Natural killer cell (primary cell): ENCODE measurements at regions of chr1 and their contacts with region 1.

Region 1: GRCh38 chr1:4652631-4653327 is 1.6 kb upstream of the AJAP1 start:
- DNase-seq: peak; percentile 44 to 68
- ATAC-seq: peak; percentile 63 to 93 (median 74)
- H3K4me3 ChIP-seq: no peak overlapping the region
- H3K4me3 Mint-ChIP-seq: no peak overlapping the region
- H3K27ac ChIP-seq: no peak overlapping the region
- H3K27ac Mint-ChIP-seq: no peak overlapping the region
- H3K4me1 ChIP-seq: peaks cover 5% of the 10 kb centered on the region
- H3K4me1 Mint-ChIP-seq: peaks cover 0 to 4% of the 10 kb centered on the region in 2 donors
- H3K27me3 ChIP-seq: peaks cover 7% of the 10 kb centered on the region
- H3K27me3 Mint-ChIP-seq: peaks cover 18 to 25% of the 10 kb centered on the region in 2 donors
- CTCF ChIP-seq: peak; percentile 93

Region 2: DNA sequence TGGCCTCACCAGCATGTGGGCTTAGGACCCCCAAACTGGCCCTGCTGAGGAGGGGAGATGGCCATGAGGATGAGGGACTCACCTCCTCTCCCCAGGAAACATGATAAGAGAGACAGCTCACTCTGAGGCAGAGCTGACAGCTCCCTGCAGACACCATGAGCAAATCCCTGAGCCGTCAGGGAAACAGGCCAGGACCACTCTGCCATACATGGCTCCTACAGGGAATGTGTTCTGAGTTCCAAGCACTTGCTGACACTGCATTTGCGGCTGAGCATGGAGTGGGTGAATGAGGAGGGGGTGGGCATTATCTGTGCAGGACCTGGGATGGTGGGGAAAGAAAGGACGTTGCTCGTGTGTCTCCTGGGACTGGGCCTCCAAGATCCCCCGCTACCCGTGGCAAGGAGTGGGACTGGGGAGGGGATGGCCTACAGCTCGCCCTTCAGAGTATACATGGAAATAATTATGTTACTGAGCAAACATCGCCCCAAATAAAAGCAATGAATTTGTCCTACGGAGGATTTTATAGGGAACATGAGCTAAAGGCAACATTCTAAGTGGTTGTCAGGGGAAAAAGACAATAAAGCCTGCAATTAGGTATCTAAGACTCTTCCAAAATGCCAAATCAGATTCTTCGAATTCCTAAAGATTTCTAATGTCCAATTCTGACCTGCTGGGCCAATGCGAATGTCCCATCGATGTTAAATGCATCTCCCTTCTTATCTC is 354.3 kb before region 1 on chr1:
- intact Hi-C with region 1: no loop called
- DNase-seq: no peak
- ATAC-seq: no peak
- H3K4me3 ChIP-seq: no peak overlapping the region
- H3K4me3 Mint-ChIP-seq: no peak overlapping the region
- H3K27ac ChIP-seq: no peak overlapping the region
- H3K27ac Mint-ChIP-seq: no peak overlapping the region
- H3K4me1 ChIP-seq: no peaks in the 10 kb centered on the region
- H3K4me1 Mint-ChIP-seq: no peaks in the 10 kb centered on the region
- H3K27me3 ChIP-seq: no peaks in the 10 kb centered on the region
- H3K27me3 Mint-ChIP-seq: peaks cover 4% of the 10 kb centered on the region in 2 donors
- CTCF ChIP-seq: no peak

Region 3: DNA sequence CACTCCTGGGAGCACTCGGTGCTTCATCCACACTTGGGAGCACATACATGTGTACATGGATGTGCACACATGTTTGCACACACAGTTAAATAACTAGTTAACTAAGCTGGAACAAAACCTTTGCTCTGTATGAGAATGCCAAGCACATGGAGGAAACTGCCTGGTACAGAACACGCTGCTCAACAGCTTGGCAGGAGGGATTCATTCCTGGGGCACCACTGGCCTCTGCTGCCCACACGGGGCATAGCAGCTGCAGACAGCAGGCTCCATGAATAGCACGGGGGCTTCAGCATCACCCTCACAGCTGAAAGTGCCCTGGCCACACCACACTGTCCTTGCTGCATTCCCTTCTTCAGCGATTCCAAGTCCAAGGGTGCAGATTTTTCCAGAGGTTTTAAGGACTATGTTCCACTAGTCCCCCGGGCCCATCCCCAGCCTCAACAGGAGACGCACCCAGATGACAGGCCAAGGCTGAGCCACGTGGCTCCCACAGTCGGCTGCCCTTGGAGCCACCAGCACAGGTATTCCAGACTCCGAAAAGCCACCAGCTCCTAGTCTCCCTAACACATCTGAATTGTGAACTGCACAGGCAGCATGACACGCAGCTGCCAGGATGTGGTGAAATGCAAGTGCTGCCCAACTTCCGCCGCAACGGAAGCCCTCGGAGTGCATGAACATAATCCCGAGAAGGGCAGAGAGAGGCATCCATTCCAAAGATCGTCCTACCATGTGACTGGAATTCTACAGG is 1322.5 kb after region 1 on chr1:
- intact Hi-C with region 1: loop called (anchors 10 kb)
- DNase-seq: peak in 1 of 2 donors; percentile 71
- ATAC-seq: peak; percentile 73 to 88 (median 80)
- H3K4me3 ChIP-seq: no peak overlapping the region
- H3K4me3 Mint-ChIP-seq: peak overlapping the region; percentile 9
- H3K27ac ChIP-seq: no peak overlapping the region
- H3K27ac Mint-ChIP-seq: no peak overlapping the region
- H3K4me1 ChIP-seq: peaks cover 4% of the 10 kb centered on the region
- H3K4me1 Mint-ChIP-seq: peaks cover 5 to 16% of the 10 kb centered on the region in 2 donors
- H3K27me3 ChIP-seq: no peaks in the 10 kb centered on the region
- H3K27me3 Mint-ChIP-seq: no peaks in the 10 kb centered on the region
- CTCF ChIP-seq: peak; percentile 58